Heart right ventricle (tissue), 16 donors: ENCODE measurements at regions of chr19 and their contacts with region 1.

Region 1: DNA sequence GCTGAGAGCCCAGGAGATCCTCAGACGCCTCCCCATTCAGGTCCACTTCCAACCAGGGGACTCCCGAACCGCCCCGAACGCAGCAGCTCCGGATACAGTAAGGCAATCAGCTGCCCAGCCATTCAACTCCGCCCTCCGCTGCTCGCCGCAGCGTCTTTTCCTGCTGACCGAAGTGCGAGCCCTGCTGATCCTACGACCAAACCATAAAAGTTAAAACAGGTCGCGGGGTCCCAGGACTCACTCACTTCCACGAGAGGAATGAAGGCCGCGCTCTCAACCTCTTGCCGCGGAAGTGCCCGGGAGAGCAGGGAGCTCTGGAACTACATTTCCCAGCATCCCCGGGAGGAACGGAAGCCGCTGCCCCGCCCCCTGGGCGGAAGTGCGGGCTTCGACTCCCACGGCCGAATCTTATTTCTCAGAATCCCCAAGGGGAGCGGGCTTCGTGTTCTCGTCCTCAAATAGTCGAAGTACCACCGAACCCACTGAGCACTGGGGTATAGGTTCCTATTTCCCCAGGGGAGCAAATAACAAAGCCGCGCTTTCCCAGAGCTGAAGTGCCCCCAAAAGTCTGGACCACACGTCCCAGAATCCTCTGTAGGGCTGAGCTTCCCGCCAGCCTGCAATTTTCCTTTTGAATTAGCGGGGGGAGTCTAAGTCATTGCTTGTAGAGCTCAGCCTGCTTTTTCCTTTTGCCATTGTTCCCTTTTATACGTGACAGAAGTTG is at the start of gene ZNF45:
- DNase-seq: peak; percentile 85 to 94
- ATAC-seq: peak; percentile 97 to 99 (median 99)
- H3K4me3 ChIP-seq: peak within 1 kb of the TSS; percentile 43 to 76 (median 66)
- H3K27ac ChIP-seq: peak within 1 kb of the TSS; percentile 39 to 92 (median 86)
- H3K4me1 ChIP-seq: peaks cover 0 to 24% (median 18%) of the 10 kb centered on the region in 9 donors
- H3K27me3 ChIP-seq: no peaks in the 10 kb centered on the region
- CTCF ChIP-seq: no peak
- total RNA-seq, gene ZNF45: 7.0 to 10.7 (median 8.0) TPM

Region 2: GRCh38 chr19:43950834-43951645 is 15.9 kb after region 1 on chr19 and contains the start of gene ZNF221:
- intact Hi-C with region 1: loop called in 3 of 10 experiments (anchors 1 to 2 kb)
- DNase-seq: peak; percentile 85 to 95
- ATAC-seq: peak; percentile 98 to 100 (median 100)
- H3K4me3 ChIP-seq: peak within 1 kb of the TSS; percentile 44 to 94 (median 78)
- H3K27ac ChIP-seq: peak within 1 kb of the TSS in 9 of 10 donors; percentile 54 to 84 (median 79)
- H3K4me1 ChIP-seq: peaks cover 0 to 4% (median 0%) of the 10 kb centered on the region in 9 donors
- H3K27me3 ChIP-seq: no peaks in the 10 kb centered on the region
- CTCF ChIP-seq: peak in 8 of 9 donors; percentile 39 to 80 (median 53)
- total RNA-seq, gene ZNF221: 3.0 to 6.7 (median 5.0) TPM